HepG2 (cell line): ENCODE measurements at regions of chr9 and their contacts with region 1.

Region 1: DNA sequence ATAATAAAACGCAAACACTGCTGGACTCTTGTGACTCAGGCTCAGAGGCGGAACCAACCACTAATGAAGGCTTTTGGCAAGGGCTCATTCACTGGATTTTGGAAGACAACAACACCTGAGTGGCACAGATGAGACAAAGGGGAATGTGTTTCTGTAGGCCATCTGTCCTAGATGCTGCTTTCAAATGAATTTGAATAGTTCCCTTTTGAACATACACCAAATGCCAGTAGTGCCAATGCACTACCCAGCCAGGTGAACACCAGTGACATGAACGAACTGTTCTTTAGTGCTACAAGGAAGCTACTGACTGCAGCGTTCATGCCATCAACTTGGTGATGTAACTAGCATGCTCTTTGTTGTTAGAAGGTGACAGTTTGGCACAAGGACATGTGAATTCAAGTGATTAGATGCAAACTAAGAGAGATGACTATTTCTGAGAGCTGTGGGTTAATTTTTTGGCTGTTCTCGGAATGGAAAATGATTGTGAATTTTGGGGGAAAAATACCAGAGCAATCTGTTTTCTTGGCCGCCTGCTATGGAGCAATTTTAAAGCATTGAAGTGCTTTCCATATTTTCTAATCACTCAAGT is 173.7 kb downstream of the SLC24A2 start:
- DNase-seq: no peak
- ATAC-seq: no peak
- H3K4me3 ChIP-seq: no peak overlapping the region
- H3K27ac ChIP-seq: no peak overlapping the region
- H3K4me1 ChIP-seq: no peaks in the 10 kb centered on the region
- H3K27me3 ChIP-seq: peaks cover 0 to 9% of the 10 kb centered on the region in 2 experiments; a peak in 2 of 5 replicates
- CTCF ChIP-seq: no peak
- EP300 ChIP-seq: no peak
- POLR2A ChIP-seq: no peak
- RAD21 ChIP-seq: no peak

Region 2: GRCh38 chr9:18379073-18379811 is 1235.9 kb before region 1 on chr9:
- CTCF ChIA-PET with region 1: no interaction called
- POLR2A ChIA-PET with region 1: no interaction called
- in situ Hi-C with region 1: no loop called
- intact Hi-C with region 1: no loop called
- DNase-seq: no peak
- ATAC-seq: no peak
- H3K4me3 ChIP-seq: no peak overlapping the region
- H3K27ac ChIP-seq: no peak overlapping the region
- H3K4me1 ChIP-seq: no peaks in the 10 kb centered on the region
- H3K27me3 ChIP-seq: no peaks in the 10 kb centered on the region
- CTCF ChIP-seq: no peak
- EP300 ChIP-seq: no peak
- POLR2A ChIP-seq: no peak
- RAD21 ChIP-seq: no peak

Region 3: GRCh38 chr9:19598722-19599121 is 16.4 kb before region 1 on chr9:
- CTCF ChIA-PET with region 1: no interaction called
- POLR2A ChIA-PET with region 1: no interaction called
- in situ Hi-C with region 1: no loop called
- intact Hi-C with region 1: loop called (anchors 1 kb)
- DNase-seq: no peak
- ATAC-seq: no peak
- H3K4me3 ChIP-seq: no peak overlapping the region
- H3K27ac ChIP-seq: no peak overlapping the region
- H3K4me1 ChIP-seq: no peaks in the 10 kb centered on the region
- H3K27me3 ChIP-seq: no peaks in the 10 kb centered on the region
- CTCF ChIP-seq: no peak
- EP300 ChIP-seq: no peak
- POLR2A ChIP-seq: no peak
- RAD21 ChIP-seq: no peak